BJ (cell line): ENCODE measurements at regions of chr2 and their contacts with region 1.

Region 1: GRCh38 chr2:7097348-7097895 is 180.2 kb downstream of the RNF144A start:
- DNase-seq: no peak
- H3K4me3 ChIP-seq: no peak overlapping the region
- H3K27me3 ChIP-seq: no peaks in the 10 kb centered on the region
- CTCF ChIP-seq: peak; percentile 99

Region 2: GRCh38 chr2:6968319-6969100 is 128.9 kb before region 1 on chr2:
- CTCF ChIA-PET with region 1: no interaction called
- POLR2A ChIA-PET with region 1: no interaction called
- DNase-seq: no peak
- H3K4me3 ChIP-seq: no peak overlapping the region
- H3K27me3 ChIP-seq: no peaks in the 10 kb centered on the region
- CTCF ChIP-seq: no peak

Region 3: GRCh38 chr2:7083577-7084509 is 13.6 kb before region 1 on chr2:
- CTCF ChIA-PET with region 1: interaction called, 21 read pairs
- POLR2A ChIA-PET with region 1: no interaction called
- DNase-seq: no peak
- H3K4me3 ChIP-seq: no peak overlapping the region
- H3K27me3 ChIP-seq: no peaks in the 10 kb centered on the region
- CTCF ChIP-seq: peak; percentile 71

Region 4: DNA sequence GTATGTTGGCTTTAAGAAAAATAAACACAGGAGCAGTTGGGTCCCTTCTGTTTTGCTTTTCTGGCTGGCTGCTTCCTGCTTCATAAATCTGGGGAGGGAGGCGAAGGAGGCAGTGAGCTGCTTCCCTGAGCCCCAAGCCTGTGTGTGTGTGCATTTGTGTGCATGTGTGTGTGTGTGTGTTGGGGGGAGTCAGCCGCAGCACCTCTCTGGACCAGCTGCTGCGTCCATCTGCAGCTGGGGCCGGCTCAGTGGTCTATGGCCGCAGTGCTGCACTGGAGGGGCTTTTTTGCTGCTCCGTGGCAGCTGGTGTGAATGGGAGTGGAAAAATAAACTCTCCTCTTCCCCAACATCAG is 12.1 kb after region 1 on chr2:
- CTCF ChIA-PET with region 1: interaction called, 31 read pairs
- POLR2A ChIA-PET with region 1: no interaction called
- DNase-seq: no peak
- H3K4me3 ChIP-seq: no peak overlapping the region
- H3K27me3 ChIP-seq: no peaks in the 10 kb centered on the region
- CTCF ChIP-seq: no peak

Region 5: DNA sequence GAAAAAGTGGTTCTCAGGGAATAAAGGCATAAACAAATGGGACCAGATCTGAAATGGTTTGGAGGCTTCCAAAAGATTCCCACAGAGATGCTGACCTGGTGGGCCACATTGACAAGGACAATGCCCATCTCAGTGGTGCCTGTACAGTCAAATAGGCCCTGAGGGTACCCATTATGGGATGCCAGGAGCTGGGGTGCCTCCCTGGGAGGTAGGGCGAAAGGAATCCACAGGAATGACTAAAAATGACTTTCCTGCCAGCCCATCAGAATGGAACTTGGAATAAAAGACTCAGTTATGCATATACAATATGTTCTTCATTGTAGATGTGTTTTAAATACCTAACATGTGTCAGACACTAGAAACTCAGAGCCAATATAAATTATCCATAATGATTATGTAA is 68.3 kb after region 1 on chr2:
- CTCF ChIA-PET with region 1: no interaction called
- POLR2A ChIA-PET with region 1: no interaction called
- DNase-seq: no peak
- H3K4me3 ChIP-seq: no peak overlapping the region
- H3K27me3 ChIP-seq: no peaks in the 10 kb centered on the region
- CTCF ChIP-seq: no peak